ENCODE measurements at regions of chr20 and their contacts with region 1.

Region 1: GRCh38 chr20:43840382-43841070 is 74.1 kb upstream of the TOX2 start:
- DNase-seq: peak in 1 of 2 experiments; percentile 15
- H3K4me3 ChIP-seq: no peak overlapping the region
- H3K27ac ChIP-seq: no peak overlapping the region
- H3K4me1 ChIP-seq: peaks cover 39% of the 10 kb centered on the region
- H3K27me3 ChIP-seq: no peaks in the 10 kb centered on the region
- CTCF ChIP-seq: peak; percentile 66

Region 2: DNA sequence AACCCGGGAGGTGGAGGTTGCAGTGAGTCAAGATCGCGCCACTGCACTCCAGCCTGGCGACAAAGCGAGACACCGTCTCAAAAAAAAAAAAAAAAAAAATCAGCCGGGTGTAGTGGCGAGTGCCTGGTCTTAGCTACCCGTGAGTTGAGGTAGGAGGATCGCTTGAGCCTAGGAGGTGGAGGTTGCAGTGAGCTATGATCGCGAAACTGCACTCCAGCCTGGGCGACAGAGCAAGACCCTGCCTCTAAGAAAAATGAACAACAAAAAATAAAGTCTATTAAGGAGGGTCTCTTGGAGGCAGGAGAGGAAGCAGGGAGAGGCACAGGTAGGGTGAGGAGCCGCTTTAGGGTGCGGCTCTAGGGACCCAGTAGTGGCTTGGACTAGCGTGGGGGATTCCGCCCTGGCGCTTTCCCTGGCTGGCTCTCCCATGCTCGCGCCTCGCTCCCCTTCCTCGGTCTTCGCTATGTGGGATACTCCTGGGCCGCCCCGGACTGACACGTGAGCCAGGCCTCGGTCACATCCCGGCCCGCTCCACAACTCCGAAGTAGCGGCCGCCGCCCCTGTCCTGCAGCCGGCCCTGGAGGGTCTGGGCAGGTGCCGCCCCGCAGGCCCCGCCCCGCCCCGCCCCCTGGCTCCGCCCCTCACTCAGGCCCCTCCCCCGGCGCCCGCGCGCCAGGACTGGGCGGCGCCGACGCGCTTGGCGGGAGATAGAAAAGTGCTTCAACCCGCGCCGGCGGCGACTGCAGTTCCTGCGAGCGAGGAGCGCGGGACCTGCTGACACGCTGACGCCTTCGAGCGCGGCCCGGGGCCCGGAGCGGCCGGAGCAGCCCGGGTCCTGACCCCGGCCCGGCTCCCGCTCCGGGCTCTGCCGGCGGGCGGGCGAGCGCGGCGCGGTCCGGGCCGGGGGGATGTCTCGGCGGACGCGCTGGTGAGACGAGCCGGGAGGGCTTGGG is 173.9 kb before region 1 on chr20 and contains the start of gene MYBL2:
- CTCF ChIA-PET with region 1: no interaction called
- POLR2A ChIA-PET with region 1: no interaction called
- intact Hi-C with region 1: no loop called
- DNase-seq: peak; percentile 40 to 72
- H3K4me3 ChIP-seq: peak within 1 kb of the TSS; percentile 70
- H3K27ac ChIP-seq: no peak within 1 kb of the TSS
- H3K4me1 ChIP-seq: peaks cover 33% of the 10 kb centered on the region
- H3K27me3 ChIP-seq: no peaks in the 10 kb centered on the region
- CTCF ChIP-seq: no peak
- total RNA-seq, gene MYBL2: 124 and 152 TPM in 2 replicates

Region 3: DNA sequence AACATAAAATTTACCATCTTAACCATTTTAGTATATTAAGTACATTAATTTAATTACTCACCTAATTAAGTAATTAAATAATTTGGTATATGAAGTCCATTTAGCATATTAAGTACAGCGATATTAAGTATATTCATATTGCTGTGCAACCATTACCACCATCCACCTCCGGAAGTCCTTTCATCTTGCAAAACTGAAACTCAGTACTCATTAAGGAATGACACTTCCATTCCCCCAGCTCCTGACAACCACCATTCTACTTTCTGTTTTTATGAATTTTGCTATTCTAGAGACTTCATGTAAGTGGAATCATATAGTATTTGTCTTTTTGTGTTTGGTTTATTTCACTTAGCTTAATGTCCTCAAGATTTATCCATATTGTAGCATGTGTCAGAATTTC is 52.6 kb before region 1 on chr20:
- CTCF ChIA-PET with region 1: no interaction called
- POLR2A ChIA-PET with region 1: no interaction called
- intact Hi-C with region 1: loop called (anchors 2 kb)
- DNase-seq: no peak
- H3K4me3 ChIP-seq: no peak overlapping the region
- H3K27ac ChIP-seq: no peak overlapping the region
- H3K4me1 ChIP-seq: peaks cover 1% of the 10 kb centered on the region; the same call in 1 of the 2 replicates
- H3K27me3 ChIP-seq: no peaks in the 10 kb centered on the region
- CTCF ChIP-seq: no peak

Region 4: DNA sequence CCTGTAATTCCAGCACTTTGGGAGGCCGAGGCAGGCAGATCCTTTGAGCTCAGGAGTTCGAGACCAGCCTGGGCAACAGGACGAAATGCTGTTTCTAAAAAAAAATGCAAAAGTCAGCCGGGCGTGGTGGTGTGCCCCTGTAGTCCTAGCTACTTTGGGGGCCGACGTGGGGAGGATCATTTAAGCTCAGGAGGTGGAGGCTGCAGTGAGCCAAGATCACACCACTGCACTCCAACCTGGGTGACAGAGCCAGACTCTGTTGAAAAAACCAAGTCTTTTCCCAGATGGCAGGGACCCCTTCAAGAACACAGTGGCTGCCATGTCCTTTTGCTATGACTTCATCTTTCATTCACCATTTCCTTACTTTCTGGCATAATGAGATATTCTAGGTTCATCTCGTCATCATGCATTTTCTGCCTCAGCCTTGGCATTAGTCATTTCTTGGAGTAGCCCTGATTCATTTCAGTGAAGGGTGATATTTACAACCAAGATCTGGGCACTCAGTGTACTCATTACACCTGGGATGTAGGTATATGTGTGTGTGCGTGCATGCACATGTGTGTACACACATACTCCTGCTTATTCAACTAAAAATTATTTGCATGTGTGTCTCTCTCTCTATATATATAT is 12.8 kb after region 1 on chr20:
- CTCF ChIA-PET with region 1: no interaction called
- POLR2A ChIA-PET with region 1: no interaction called
- intact Hi-C with region 1: no loop called
- DNase-seq: no peak
- H3K4me3 ChIP-seq: no peak overlapping the region
- H3K27ac ChIP-seq: no peak overlapping the region
- H3K4me1 ChIP-seq: peaks cover 29% of the 10 kb centered on the region
- H3K27me3 ChIP-seq: no peaks in the 10 kb centered on the region
- CTCF ChIP-seq: no peak

Region 5: GRCh38 chr20:43911066-43911465 is 70.5 kb after region 1 on chr20:
- CTCF ChIA-PET with region 1: interaction called, 8 read pairs
- POLR2A ChIA-PET with region 1: no interaction called
- intact Hi-C with region 1: loop called (anchors 1 kb)
- DNase-seq: peak; percentile 40 to 77
- H3K4me3 ChIP-seq: no peak overlapping the region
- H3K27ac ChIP-seq: no peak overlapping the region
- H3K4me1 ChIP-seq: peaks cover 22% of the 10 kb centered on the region
- H3K27me3 ChIP-seq: no peaks in the 10 kb centered on the region
- CTCF ChIP-seq: peak; percentile 69

Region 6: GRCh38 chr20:43942661-43943290 is 102.2 kb after region 1 on chr20:
- CTCF ChIA-PET with region 1: interaction called, 5 read pairs
- POLR2A ChIA-PET with region 1: no interaction called
- intact Hi-C with region 1: loop called (anchors 1 kb)
- DNase-seq: peak; percentile 70 to 85
- H3K4me3 ChIP-seq: peak overlapping the region; percentile 53
- H3K27ac ChIP-seq: peak overlapping the region; percentile 95
- H3K4me1 ChIP-seq: peaks cover 68% of the 10 kb centered on the region
- H3K27me3 ChIP-seq: no peaks in the 10 kb centered on the region
- CTCF ChIP-seq: no peak

Region 7: GRCh38 chr20:43955062-43955749 is 114.7 kb after region 1 on chr20:
- CTCF ChIA-PET with region 1: interaction called, 3 read pairs
- POLR2A ChIA-PET with region 1: interaction called, 26 read pairs
- intact Hi-C with region 1: loop called (anchors 1 kb)
- DNase-seq: peak; percentile 80 to 99
- H3K4me3 ChIP-seq: peak overlapping the region; percentile 22; the same call in 1 of the 2 replicates
- H3K27ac ChIP-seq: peak overlapping the region; percentile 97
- H3K4me1 ChIP-seq: peaks cover 77% of the 10 kb centered on the region
- H3K27me3 ChIP-seq: no peaks in the 10 kb centered on the region
- CTCF ChIP-seq: no peak

Region 8: DNA sequence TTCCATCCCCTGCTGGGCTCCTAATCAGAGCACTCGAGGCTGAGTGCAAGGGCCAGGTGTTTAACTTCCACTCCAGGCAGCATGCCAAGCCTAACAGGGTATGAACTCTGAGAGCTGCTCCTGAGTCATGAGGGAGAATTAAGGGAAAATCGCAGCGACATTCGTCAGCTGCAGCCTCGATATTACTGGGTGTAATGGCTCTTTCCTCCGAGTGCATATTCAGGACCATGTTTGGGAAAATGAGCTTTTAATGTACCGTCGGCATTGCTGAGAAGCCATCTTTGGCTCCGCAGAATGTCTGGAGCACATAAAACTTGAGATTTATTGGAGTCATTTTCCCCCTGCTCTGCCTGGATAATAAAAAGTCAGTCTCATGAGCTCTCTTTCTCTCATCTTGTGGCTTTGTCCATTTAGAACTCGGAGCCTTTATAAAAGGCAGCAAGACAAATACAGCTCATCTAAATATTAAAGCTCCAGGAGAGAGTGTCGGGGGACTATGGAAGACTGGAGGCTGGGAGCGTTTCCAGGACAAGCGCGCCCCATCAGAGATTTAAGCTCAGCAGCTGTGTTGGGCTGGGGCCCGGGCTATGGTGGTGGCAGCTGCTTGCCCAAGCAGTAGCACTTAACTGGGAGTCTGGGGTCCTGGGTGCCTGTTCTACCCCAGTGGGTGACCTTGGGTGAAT is 177.9 kb after region 1 on chr20:
- CTCF ChIA-PET with region 1: no interaction called
- POLR2A ChIA-PET with region 1: no interaction called
- intact Hi-C with region 1: loop called (anchors 10 kb)
- DNase-seq: peak; percentile 77 to 94
- H3K4me3 ChIP-seq: peak overlapping the region; percentile 33; the same call in 1 of the 2 replicates
- H3K27ac ChIP-seq: peak overlapping the region; percentile 51
- H3K4me1 ChIP-seq: peaks cover 26% of the 10 kb centered on the region
- H3K27me3 ChIP-seq: no peaks in the 10 kb centered on the region
- CTCF ChIP-seq: no peak

Region 9: DNA sequence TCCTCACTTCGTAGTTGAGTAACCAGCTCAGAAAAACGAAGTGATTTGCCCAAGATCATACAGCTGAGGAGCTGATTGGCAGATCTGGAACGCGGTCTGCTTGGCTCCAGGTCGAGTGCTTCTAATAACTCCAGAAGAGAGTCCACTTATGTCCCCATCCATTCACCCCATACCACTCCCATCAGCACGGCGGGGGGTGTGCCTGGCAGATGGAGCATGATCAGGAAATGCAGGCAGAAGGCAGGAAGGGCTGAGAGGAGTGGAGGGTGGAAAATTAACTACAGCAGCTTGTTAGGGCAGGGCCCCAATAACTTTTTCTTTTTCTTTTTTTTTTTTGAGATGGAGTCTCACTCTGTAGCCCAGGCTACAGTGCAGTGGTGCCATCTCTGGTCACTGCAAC is 455.5 kb after region 1 on chr20:
- CTCF ChIA-PET with region 1: no interaction called
- POLR2A ChIA-PET with region 1: no interaction called
- intact Hi-C with region 1: no loop called
- DNase-seq: no peak
- H3K4me3 ChIP-seq: no peak overlapping the region
- H3K27ac ChIP-seq: no peak overlapping the region
- H3K4me1 ChIP-seq: no peaks in the 10 kb centered on the region
- H3K27me3 ChIP-seq: no peaks in the 10 kb centered on the region
- CTCF ChIP-seq: no peak

Measured in PC-9 (cell line).